Mammary epithelial cell (primary cell): ENCODE measurements at regions of chr9 and their contacts with region 1.

Region 1: GRCh38 chr9:81689343-81690190 is at the start of gene TLE1:
- DNase-seq: peak; percentile 100
- H3K4me3 ChIP-seq: peak within 1 kb of the TSS; percentile 72 to 93 (median 88)
- H3K27ac ChIP-seq: peak within 1 kb of the TSS; percentile 75
- H3K4me1 ChIP-seq: peaks cover 14% of the 10 kb centered on the region
- H3K27me3 ChIP-seq: no peaks in the 10 kb centered on the region
- CTCF ChIP-seq: no peak
- total RNA-seq, gene TLE1: 13.6 to 21.7 TPM

Region 2: GRCh38 chr9:81096625-81097024 is 592.9 kb before region 1 on chr9:
- CTCF ChIA-PET with region 1: no interaction called
- dilution Hi-C with region 1: no loop called
- in situ Hi-C with region 1: no loop called
- intact Hi-C with region 1: loop called (anchors 5 kb)
- DNase-seq: peak; percentile 12
- H3K4me3 ChIP-seq: no peak overlapping the region
- H3K27ac ChIP-seq: no peak overlapping the region
- H3K4me1 ChIP-seq: no peaks in the 10 kb centered on the region
- H3K27me3 ChIP-seq: no peaks in the 10 kb centered on the region
- CTCF ChIP-seq: no peak

Region 3: DNA sequence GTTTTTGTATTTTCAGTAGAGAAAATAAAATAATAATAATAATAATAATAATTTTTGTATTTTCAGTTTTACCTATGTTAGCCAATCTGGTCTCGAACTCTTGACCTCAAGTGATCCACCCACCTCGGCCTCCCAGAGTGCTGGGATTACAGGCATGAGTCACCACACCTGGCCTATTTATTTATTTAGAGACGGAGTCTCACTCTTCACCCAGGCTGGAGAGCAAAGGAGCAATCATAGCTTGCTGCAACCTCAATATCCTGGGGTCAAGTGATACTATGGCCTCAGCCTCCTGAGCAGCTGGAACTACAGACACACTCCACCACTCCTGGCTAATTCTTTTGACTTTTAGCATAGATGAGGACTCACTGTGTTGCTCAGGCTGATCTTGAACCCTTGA is 167.7 kb before region 1 on chr9:
- CTCF ChIA-PET with region 1: interaction called, 7 read pairs
- dilution Hi-C with region 1: loop called (anchors 25 kb)
- in situ Hi-C with region 1: loop called in 1 of 2 experiments (anchors 10 kb)
- intact Hi-C with region 1: loop called (anchors 1 kb)
- DNase-seq: peak; percentile 56
- H3K4me3 ChIP-seq: no peak overlapping the region
- H3K27ac ChIP-seq: no peak overlapping the region
- H3K4me1 ChIP-seq: no peaks in the 10 kb centered on the region
- H3K27me3 ChIP-seq: no peaks in the 10 kb centered on the region
- CTCF ChIP-seq: no peak

Region 4: DNA sequence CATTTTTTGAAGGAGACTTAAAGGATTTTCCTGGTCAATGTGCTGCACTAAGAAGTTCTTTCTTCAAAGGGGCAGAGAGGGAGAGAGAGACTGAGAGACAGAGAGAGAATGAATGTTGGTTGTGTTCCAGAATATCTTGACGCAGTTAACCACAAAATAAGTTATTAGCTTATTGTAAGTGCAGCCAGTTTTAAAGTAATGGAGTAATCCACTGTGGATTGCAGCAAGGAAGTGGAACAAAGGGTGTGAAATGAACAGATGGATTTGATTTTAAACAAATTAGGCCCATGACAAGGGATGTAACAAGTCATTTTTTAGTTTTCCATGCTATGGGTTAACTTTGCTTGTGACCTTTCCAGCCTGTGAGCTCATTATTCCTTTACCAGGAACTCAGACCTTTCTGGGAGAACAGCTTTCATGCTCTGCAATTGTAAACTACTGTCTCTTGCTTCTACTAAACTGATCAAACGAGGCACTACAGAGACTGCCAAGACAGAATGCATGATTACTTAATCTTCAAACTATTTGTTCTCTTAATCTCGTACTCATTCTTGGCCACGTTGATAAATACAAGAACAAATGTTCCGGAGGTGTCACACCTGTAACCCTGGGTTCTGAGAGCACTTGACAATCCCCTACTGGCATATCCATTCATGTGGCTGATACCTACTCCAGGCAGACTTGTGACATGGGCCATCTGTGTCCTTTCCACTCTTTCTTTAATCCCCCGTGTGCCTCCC is 131.3 kb before region 1 on chr9:
- CTCF ChIA-PET with region 1: no interaction called
- dilution Hi-C with region 1: no loop called
- in situ Hi-C with region 1: no loop called
- intact Hi-C with region 1: loop called (anchors 2 kb)
- DNase-seq: peak; percentile 57
- H3K4me3 ChIP-seq: no peak overlapping the region
- H3K27ac ChIP-seq: peak overlapping the region; percentile 14
- H3K4me1 ChIP-seq: peaks cover 55% of the 10 kb centered on the region
- H3K27me3 ChIP-seq: no peaks in the 10 kb centered on the region
- CTCF ChIP-seq: no peak

Region 5: DNA sequence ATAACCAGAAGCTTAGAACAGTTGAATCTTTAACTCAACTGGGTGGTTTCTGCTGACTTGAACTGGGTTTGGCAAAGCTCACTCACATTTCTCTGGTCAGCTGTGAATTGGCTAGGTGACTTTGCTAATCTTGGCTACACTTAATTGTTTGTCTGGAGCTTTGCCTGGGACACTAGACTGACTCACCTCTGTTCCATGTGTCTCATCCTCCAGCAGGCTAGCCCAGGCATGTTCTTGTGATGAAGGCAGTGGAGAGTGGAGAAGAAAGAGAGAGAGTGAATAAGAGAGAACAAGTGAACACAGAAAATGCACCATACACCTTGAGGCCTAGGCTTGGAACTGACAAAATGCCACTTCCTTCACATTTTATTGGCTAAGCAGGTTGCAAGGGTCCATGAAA is 331.6 kb after region 1 on chr9:
- CTCF ChIA-PET with region 1: no interaction called
- dilution Hi-C with region 1: no loop called
- in situ Hi-C with region 1: no loop called
- intact Hi-C with region 1: loop called (anchors 10 kb)
- DNase-seq: peak; percentile 99
- H3K4me3 ChIP-seq: no peak overlapping the region
- H3K27ac ChIP-seq: peak overlapping the region; percentile 71
- H3K4me1 ChIP-seq: peaks cover 15% of the 10 kb centered on the region
- H3K27me3 ChIP-seq: no peaks in the 10 kb centered on the region
- CTCF ChIP-seq: peak in 1 of 2 donors; percentile 6

Region 6: DNA sequence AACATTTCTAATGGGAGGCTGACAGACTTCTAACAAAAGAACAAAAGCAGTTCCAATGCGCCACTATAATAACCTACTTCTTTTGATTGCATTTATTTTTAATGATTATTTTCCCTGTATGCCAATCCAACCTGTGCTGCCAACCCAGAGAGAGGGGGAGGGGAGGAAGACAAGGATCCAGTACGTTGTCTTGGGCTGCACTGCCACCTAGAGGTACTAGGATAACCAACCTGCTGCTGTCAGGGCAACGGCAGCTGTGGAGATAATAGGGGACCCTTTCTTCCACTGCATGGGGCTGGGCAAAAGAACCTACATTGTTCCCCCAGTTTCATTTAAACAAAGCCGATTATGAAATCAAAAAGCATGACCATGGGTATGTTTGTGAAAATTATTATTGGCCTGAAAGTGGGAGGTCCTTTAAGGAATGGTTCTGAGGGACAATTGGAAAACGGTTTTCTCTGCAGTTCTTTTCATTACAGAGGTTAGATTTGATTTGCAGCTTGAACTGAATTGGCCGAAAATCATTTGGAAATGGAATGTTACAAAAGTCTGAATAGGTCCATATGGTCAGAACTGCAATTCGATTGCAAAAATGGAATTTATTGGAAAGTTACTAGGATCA is 1272.0 kb after region 1 on chr9:
- CTCF ChIA-PET with region 1: no interaction called
- dilution Hi-C with region 1: no loop called
- in situ Hi-C with region 1: no loop called
- intact Hi-C with region 1: loop called (anchors 2 kb)
- DNase-seq: peak; percentile 68
- H3K4me3 ChIP-seq: no peak overlapping the region
- H3K27ac ChIP-seq: no peak overlapping the region
- H3K4me1 ChIP-seq: no peaks in the 10 kb centered on the region
- H3K27me3 ChIP-seq: no peaks in the 10 kb centered on the region
- CTCF ChIP-seq: peak; percentile 74 to 91